ENCODE measurements at regions of chr4 and their contacts with region 1.

Region 1: DNA sequence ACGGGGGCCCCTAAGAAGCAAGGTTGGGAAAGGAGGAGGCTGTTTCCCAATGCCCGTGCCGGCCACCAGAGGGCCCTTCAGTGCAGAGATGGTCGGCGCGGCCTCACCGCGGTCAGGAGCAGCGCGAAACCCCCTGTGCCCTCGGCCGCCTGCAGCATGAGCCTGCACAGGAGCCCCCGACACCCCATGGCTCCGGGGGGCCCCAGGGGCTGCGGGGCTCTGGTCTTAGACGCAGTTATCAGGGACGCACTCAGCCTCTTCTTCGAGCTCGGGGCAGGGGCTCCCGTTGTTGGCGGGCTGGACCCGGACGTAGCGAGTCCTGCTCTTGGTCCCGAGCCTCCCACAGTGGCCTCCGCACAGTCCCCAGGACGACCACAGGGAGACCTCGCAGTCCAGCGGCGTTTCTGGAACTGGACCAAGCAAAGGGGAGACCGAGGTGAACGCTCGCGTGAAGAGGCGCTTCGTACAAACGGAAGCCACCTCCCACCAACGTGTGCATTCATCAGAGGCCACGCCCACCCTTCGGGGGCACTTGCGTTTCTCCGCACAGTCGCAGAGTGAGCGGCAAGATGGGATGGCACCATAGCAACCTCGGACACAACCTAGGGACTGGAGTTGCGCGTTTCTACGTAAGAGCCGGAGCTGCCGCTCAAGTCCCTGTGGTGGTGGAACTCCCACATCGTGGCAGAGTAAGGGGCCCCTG is 5.0 kb downstream of the SPON2 start:
- DNase-seq: peak; percentile 79 to 98 (median 91)
- ATAC-seq: peak; percentile 84
- H3K4me3 ChIP-seq: peak overlapping the region; percentile 92 to 97
- H3K4me3 Mint-ChIP-seq: peak overlapping the region; percentile 88
- H3K27ac ChIP-seq: peak overlapping the region; percentile 70 to 85
- H3K27ac Mint-ChIP-seq: peak overlapping the region; percentile 83
- H3K4me1 ChIP-seq: peaks cover 28% of the 10 kb centered on the region
- H3K4me1 Mint-ChIP-seq: peaks cover 26% of the 10 kb centered on the region
- H3K27me3 ChIP-seq: peaks cover 11 to 13% of the 10 kb centered on the region in 2 experiments
- H3K27me3 Mint-ChIP-seq: peaks cover 7% of the 10 kb centered on the region
- CTCF ChIP-seq: peak; percentile 97

Region 2: DNA sequence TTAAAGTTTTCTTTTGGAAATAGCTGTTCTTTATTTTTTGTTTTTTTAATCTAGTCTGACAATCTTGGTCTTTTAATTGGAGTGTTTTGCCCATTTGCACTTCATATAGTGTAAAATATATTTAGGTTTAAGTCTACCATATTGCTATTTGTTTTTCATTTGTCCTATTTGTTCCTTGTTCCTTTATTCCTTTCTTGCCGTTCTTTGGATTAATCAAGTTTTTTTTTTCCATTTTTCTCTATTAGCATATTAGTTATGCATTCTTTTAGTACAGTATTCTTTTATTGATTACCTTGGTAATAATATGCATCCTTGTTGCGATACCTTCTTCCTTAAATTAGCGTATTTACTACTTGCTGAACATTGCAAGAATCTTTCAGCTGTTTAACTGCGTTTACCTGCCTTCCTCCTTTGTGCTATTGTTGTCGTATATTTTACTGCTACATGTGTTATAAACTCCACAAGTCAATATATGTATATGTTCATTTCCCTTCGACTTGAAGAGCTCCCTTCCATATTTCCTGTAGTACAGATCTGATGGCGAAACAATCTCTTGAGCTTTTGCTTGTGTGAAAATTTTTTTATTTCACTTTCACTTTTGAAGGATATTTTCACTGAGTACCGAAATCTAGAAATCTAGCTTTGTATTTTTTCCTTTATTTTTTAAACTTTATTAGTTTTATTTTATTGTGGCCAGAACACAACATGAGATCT is 30.2 kb before region 1 on chr4:
- CTCF ChIA-PET with region 1: interaction called, 13 read pairs
- POLR2A ChIA-PET with region 1: no interaction called
- intact Hi-C with region 1: no loop called
- DNase-seq: peak in 2 of 9 experiments; percentile 20 to 52
- ATAC-seq: no peak
- H3K4me3 ChIP-seq: peak overlapping the region; percentile 19 to 31
- H3K4me3 Mint-ChIP-seq: peak overlapping the region; percentile 81
- H3K27ac ChIP-seq: peak overlapping the region in 1 of 2 experiments; percentile 23
- H3K27ac Mint-ChIP-seq: peak overlapping the region; percentile 76
- H3K4me1 ChIP-seq: peaks cover 12% of the 10 kb centered on the region
- H3K4me1 Mint-ChIP-seq: peaks cover 23% of the 10 kb centered on the region
- H3K27me3 ChIP-seq: no peaks in the 10 kb centered on the region
- H3K27me3 Mint-ChIP-seq: peaks cover 3% of the 10 kb centered on the region
- CTCF ChIP-seq: no peak

Region 3: DNA sequence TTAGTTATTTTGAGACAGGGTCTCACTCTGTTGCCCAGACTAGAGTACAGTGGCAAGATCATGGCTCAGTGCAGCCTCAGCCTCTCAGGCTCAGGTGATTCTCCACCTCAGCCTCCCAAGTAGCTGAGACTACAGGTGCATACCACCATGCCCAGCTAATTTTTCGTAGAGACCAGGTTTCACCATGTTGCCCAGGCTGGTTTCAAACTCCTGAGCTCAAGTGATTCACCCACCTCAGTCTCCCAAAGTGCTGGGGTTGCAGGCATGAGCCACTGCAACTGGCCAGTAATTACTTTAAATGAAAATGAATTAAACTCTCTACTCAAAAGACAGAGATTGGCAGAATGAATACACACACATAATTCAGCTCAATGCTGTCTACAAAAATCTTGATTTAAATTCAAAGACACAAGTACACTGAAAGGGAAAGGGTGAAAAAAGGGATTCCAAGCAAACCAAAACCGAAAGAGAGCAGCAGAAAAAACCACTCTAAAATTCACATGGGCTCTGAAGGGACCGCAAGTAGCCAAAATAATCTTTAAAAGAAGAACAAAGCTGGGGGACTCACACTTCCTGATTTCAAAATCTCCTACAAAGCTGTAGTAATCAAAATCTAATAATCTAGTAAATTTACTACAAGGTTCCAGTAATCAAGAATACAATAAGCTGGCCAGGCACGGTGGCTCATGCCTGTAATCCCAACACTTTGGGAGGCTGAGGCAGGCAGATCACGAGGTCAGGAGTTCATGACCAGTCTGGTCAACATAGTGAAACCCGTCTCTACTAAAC is 16.8 kb after region 1 on chr4:
- CTCF ChIA-PET with region 1: interaction called, 16 read pairs
- POLR2A ChIA-PET with region 1: interaction called, 3 read pairs
- intact Hi-C with region 1: loop called in 1 of 2 experiments (anchors 2 kb)
- DNase-seq: peak in 2 of 9 experiments; percentile 46 to 70
- ATAC-seq: no peak
- H3K4me3 ChIP-seq: peak overlapping the region in 1 of 2 experiments; percentile 13
- H3K4me3 Mint-ChIP-seq: peak overlapping the region; percentile 63
- H3K27ac ChIP-seq: peak overlapping the region in 1 of 2 experiments; percentile 61
- H3K27ac Mint-ChIP-seq: peak overlapping the region; percentile 32
- H3K4me1 ChIP-seq: peaks cover 19% of the 10 kb centered on the region
- H3K4me1 Mint-ChIP-seq: peaks cover 33% of the 10 kb centered on the region
- H3K27me3 ChIP-seq: no peaks in the 10 kb centered on the region
- H3K27me3 Mint-ChIP-seq: no peaks in the 10 kb centered on the region
- CTCF ChIP-seq: no peak

Region 4: DNA sequence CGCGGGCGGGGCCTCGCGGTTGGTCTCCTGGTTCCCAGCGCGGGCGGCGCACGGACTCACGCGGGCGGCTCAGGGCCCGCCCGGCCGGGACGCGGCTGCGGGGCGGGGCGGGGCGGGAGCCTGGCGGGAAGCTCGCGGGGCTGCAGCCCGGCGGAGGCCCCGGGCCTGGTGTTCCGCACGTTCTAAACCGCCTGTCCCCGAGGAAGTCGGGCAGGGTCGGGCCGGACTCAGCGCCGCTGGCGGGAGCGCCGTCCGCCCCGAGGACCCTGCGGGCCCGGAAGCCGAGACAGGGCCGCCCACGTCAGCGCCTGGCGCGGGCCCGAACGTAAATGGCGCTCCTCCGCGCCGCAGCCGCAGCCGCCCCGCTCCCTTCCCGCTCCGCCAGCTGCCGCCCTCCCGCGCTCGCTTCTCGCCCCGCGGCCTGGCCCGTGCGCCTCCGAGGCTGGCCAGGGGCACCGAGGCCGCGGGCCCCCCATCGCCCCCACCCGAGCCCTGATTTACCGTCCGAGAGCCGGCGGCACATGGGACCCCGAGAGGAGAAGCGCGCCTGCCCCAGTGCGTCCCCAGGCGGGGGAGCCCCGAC is 81.8 kb after region 1 on chr4:
- CTCF ChIA-PET with region 1: interaction called, 7 read pairs
- POLR2A ChIA-PET with region 1: interaction called, 10 read pairs
- intact Hi-C with region 1: loop called (anchors 1 kb)
- DNase-seq: peak; percentile 71 to 94 (median 85)
- ATAC-seq: peak; percentile 66
- H3K4me3 ChIP-seq: peak overlapping the region; percentile 76 to 82
- H3K4me3 Mint-ChIP-seq: peak overlapping the region; percentile 89
- H3K27ac ChIP-seq: peak overlapping the region; percentile 86 to 93
- H3K27ac Mint-ChIP-seq: peak overlapping the region; percentile 95
- H3K4me1 ChIP-seq: peaks cover 72% of the 10 kb centered on the region
- H3K4me1 Mint-ChIP-seq: peaks cover 69% of the 10 kb centered on the region
- H3K27me3 ChIP-seq: no peaks in the 10 kb centered on the region
- H3K27me3 Mint-ChIP-seq: no peaks in the 10 kb centered on the region
- CTCF ChIP-seq: no peak

Region 5: DNA sequence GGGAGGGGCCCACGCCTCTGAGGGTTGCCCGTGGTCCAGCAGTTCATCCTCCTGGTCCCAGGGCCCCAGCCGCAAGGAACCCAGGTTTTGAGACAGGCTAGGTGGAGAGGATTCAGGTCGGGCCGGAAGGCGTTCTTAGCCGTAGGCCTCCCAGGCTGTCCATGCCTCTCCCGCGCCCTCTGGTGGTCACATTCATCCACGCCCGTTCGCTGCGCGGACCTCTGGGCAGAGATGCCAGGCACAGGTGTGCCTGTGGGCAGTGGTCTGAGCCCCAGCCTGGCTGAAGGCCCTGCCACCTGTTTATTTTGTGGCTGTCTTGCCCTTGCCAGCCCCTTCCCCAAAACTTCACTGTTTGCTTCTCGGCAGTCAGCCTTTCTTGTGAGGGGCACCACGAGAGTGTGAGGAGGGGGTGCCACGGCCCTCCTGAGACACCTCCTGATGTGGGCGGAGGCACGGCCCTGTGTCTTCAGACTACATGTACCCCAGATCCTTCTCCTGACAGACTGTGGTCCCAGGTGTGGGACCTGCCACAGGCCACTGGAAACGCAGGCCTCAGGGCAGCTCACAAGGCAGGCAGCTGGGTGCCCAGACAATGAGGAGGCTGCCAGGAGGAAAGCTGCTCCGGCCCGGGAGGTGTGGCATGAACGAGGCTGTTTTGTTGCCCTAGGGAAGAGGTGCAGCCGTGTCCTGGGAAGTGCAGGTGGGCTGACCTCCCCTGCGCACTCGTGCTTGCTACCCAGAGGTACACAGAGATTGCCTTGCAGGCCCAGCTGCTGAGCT is 184.6 kb after region 1 on chr4:
- CTCF ChIA-PET with region 1: interaction called, 6 read pairs
- POLR2A ChIA-PET with region 1: no interaction called
- intact Hi-C with region 1: loop called (anchors 1 kb)
- DNase-seq: peak; percentile 78 to 96 (median 90)
- ATAC-seq: peak; percentile 30
- H3K4me3 ChIP-seq: no peak overlapping the region
- H3K4me3 Mint-ChIP-seq: no peak overlapping the region
- H3K27ac ChIP-seq: peak overlapping the region in 1 of 2 experiments; percentile 28
- H3K27ac Mint-ChIP-seq: peak overlapping the region; percentile 72
- H3K4me1 ChIP-seq: peaks cover 21% of the 10 kb centered on the region
- H3K4me1 Mint-ChIP-seq: peaks cover 33% of the 10 kb centered on the region
- H3K27me3 ChIP-seq: no peaks in the 10 kb centered on the region
- H3K27me3 Mint-ChIP-seq: no peaks in the 10 kb centered on the region
- CTCF ChIP-seq: peak; percentile 85